Gastrocnemius medialis (tissue), 4 donors: ENCODE measurements at regions of chr20 and their contacts with region 1.

Region 1: DNA sequence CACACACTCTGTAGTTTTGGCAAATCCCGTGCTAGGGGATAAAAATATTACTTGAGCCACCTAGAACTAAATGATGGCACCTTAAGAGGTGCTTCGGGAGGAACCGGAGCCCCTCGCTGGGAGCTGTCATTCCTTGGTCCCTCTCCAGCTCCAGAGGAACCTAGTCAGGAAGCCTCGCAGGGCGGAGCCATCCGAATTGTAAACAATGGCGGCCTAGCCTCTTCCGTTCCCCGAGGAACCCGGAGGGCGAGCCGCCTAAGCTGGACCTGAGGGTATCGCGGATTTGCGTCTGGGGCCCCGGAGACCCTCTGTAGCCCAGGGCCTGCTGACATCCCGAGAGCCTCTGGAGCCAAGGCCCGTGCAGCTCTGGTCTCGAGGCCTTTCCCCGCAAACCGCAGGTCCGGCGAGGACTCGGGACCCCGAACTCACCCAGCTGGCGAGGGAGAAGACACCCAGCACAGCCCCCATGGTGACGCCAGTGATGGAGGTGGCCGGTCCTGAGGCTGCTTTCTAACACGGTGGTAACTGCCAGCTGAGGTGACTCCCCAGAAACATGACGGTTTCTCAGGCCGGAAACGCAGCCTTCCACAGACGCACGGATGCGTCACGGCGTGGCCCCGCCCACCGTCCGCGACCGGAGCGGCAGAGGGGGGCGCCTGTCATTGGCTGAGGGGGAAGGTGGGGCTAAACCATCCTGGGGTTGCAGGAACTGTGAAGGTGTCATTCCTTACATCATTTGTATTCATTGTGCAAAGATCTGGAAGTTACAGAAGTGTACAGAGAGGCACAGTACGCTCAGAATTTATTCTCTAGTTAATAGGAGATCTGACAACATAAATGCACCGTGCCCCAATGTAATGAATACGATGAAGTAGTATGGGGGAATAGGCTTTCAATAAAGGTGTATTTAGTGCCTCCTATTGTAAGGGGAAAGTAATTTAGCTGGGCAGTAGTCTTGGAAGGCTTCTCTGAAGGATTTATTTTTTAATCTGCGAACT is at the start of gene SERINC3:
- DNase-seq: peak; percentile 94 to 96
- ATAC-seq: peak; percentile 93 to 95
- H3K4me3 ChIP-seq: peak within 1 kb of the TSS; percentile 94 to 100 (median 98)
- H3K27ac ChIP-seq: peak within 1 kb of the TSS; percentile 98 to 100 (median 100)
- H3K4me1 ChIP-seq: peaks cover 42 to 49% of the 10 kb centered on the region in 2 donors
- H3K27me3 ChIP-seq: no peaks in the 10 kb centered on the region
- CTCF ChIP-seq: no peak
- POLR2A ChIP-seq: peak; percentile 97
- total RNA-seq, gene SERINC3: 93.3 to 174 (median 139) TPM

Region 2: GRCh38 chr20:44467289-44467883 is 54.4 kb before region 1 on chr20:
- in situ Hi-C with region 1: no loop called
- intact Hi-C with region 1: loop called (anchors 2 kb)
- DNase-seq: peak; percentile 77 to 91
- ATAC-seq: peak; percentile 86 to 88
- H3K4me3 ChIP-seq: no peak overlapping the region
- H3K27ac ChIP-seq: peak overlapping the region; percentile 60 to 88 (median 76)
- H3K4me1 ChIP-seq: peaks cover 0 to 13% of the 10 kb centered on the region in 2 donors
- H3K27me3 ChIP-seq: no peaks in the 10 kb centered on the region
- CTCF ChIP-seq: no peak
- POLR2A ChIP-seq: no peak

Region 3: GRCh38 chr20:44475694-44476560 is 45.9 kb before region 1 on chr20 and contains the start of gene TTPAL:
- in situ Hi-C with region 1: no loop called
- intact Hi-C with region 1: loop called (anchors 1 kb)
- DNase-seq: peak; percentile 77 to 88
- ATAC-seq: peak; percentile 85 to 87
- H3K4me3 ChIP-seq: peak within 1 kb of the TSS; percentile 66 to 97 (median 78)
- H3K27ac ChIP-seq: peak within 1 kb of the TSS; percentile 88 to 99 (median 92)
- H3K4me1 ChIP-seq: peaks cover 12 to 15% of the 10 kb centered on the region in 2 donors
- H3K27me3 ChIP-seq: no peaks in the 10 kb centered on the region
- CTCF ChIP-seq: peak; percentile 31 to 63 (median 52)
- POLR2A ChIP-seq: peak; percentile 96 to 98
- total RNA-seq, gene TTPAL: 3.5 to 5.0 (median 4.7) TPM

Region 4: GRCh38 chr20:44501448-44501847 is 20.3 kb before region 1 on chr20:
- in situ Hi-C with region 1: no loop called
- intact Hi-C with region 1: loop called (anchors 2 kb)
- DNase-seq: peak; percentile 36 to 74
- ATAC-seq: peak; percentile 95
- H3K4me3 ChIP-seq: no peak overlapping the region
- H3K27ac ChIP-seq: peak overlapping the region; percentile 77 to 93 (median 87)
- H3K4me1 ChIP-seq: peaks cover 24 to 40% of the 10 kb centered on the region in 2 donors
- H3K27me3 ChIP-seq: no peaks in the 10 kb centered on the region
- CTCF ChIP-seq: no peak
- POLR2A ChIP-seq: peak in 1 of 2 donors; percentile 5

Region 5: GRCh38 chr20:44552950-44553908 is 31.4 kb after region 1 on chr20:
- in situ Hi-C with region 1: no loop called
- intact Hi-C with region 1: loop called (anchors 1 kb)
- DNase-seq: no peak
- ATAC-seq: peak; percentile 83 to 94
- H3K4me3 ChIP-seq: peak overlapping the region in 1 of 4 donors; percentile 0
- H3K27ac ChIP-seq: peak overlapping the region; percentile 76 to 92 (median 82)
- H3K4me1 ChIP-seq: peaks cover 34 to 39% of the 10 kb centered on the region in 2 donors
- H3K27me3 ChIP-seq: no peaks in the 10 kb centered on the region
- CTCF ChIP-seq: no peak
- POLR2A ChIP-seq: no peak

Region 6: GRCh38 chr20:44610313-44610962 is 88.7 kb after region 1 on chr20:
- in situ Hi-C with region 1: no loop called
- intact Hi-C with region 1: no loop called
- DNase-seq: no peak
- ATAC-seq: no peak
- H3K4me3 ChIP-seq: no peak overlapping the region
- H3K27ac ChIP-seq: peak overlapping the region; percentile 88 to 93 (median 92)
- H3K4me1 ChIP-seq: peaks cover 42 to 50% of the 10 kb centered on the region in 2 donors
- H3K27me3 ChIP-seq: no peaks in the 10 kb centered on the region
- CTCF ChIP-seq: peak in 2 of 5 experiments; percentile 6 to 10
- POLR2A ChIP-seq: no peak